ENCODE measurements at regions of chrX and their contacts with region 1.

Region 1: DNA sequence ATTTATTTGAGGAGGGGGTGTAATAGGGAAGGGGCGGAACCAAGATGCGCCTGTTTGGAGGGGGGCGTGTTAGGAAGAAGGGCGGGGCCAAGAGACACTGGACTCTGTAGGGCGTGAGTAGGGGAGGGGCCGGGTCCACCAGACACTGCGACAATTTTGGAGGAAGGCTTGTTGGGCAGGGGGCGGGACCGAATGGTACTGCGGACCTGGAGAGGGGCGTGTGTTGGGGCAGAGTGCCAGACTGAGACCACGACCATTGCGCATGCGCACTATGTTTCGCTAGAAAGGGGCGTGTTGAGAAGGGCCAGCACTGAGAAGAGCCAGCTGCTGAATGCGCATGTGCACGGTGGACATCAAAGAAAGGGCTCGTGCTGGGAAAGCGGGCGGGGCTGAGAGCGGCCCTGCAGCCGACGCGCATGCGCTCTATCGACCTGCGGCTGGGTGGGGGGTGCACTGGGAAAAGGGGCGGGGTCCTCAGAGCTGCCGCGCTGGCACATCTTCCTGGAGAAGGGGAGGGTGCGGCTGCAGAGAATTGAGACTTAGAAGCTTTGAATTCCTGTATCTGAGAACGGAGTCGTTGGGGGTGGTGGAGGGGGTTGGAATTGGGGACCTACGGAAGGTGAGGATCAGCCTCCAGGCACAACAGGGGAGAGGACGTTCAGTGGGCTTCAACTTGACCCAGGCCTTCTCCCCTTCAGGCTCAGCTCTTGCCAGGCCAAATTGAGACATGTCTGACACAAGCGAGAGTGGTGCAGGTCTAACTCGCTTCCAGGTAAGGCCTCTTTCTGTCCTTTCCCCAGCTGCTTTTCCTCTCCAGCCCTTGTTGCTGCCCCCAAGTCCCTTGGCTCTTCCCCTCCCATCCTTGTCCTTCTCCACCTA is 1.3 kb downstream of the MAGED2 start:
- DNase-seq: peak; percentile 97 to 99
- H3K4me3 ChIP-seq: peak overlapping the region; percentile 58
- H3K4me1 ChIP-seq: peaks cover 9% of the 10 kb centered on the region
- H3K27me3 ChIP-seq: 0 out of 2 replicates have a peak, but pooled peaks cover 4% of the 10 kb centered on the region

Region 2: DNA sequence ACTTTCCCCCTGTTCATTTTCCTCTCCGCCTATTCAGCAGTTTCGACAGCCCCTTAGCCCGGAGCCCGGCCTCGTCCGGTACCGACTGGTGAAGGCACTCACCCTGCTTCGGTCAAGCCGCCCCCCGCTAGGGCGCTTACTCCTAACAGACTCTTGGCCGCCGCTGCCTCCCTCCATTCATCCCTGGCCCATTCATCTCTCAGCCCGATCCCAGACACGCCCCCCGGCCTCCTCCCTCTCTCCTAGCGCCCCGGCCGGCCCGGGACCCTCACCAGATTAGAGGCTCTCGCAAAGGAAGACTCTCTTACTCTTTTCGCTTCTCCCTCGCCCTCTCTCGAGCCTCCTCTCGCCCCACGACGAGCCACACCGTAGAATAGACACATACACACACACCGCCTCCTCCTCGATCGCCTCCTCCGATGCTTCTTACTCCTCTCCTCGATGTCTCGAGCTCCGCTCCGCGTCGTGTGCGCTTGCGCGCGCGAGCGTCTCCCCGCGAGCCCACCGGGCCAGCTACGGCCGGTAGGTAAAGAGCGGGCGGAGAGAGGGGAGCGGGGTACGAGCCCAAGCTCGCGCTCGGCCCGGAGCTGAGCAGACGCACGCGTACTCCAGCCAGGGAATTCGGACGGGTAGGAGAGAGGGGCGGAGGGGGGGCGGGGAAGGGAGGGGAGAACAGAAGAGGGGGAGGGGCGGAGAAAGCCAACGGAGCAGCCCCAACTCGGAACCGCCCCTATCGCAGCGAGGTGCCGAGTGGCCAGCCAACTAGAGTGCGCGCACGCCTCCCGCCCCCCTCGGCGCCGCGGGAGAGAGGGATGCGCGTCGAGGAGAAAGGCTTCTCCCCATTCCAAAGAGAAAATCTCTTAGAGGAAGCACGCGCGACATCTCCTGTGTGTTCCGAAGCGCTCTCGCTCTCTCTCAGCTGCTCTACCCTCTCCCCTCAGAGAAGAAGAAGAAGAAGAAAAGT is 451.1 kb before region 1 on chrX and contains the start of gene WNK3:
- in situ Hi-C with region 1: loop called (anchors 25 kb)
- DNase-seq: peak; percentile 87 to 97
- H3K4me3 ChIP-seq: peak within 1 kb of the TSS; percentile 81
- H3K4me1 ChIP-seq: peaks cover 21% of the 10 kb centered on the region
- H3K27me3 ChIP-seq: peaks cover 24% of the 10 kb centered on the region

Region 3: GRCh38 chrX:54708404-54708803 is 100.4 kb before region 1 on chrX:
- in situ Hi-C with region 1: no loop called
- DNase-seq: no peak
- H3K4me3 ChIP-seq: no peak overlapping the region
- H3K4me1 ChIP-seq: no peaks in the 10 kb centered on the region
- H3K27me3 ChIP-seq: 0 out of 2 replicates have a peak, but pooled peaks cover 2% of the 10 kb centered on the region

Measured in HAP-1 (cell line).